GM12878 (cell line): ENCODE measurements at regions of chr3 and their contacts with region 1.

Region 1: DNA sequence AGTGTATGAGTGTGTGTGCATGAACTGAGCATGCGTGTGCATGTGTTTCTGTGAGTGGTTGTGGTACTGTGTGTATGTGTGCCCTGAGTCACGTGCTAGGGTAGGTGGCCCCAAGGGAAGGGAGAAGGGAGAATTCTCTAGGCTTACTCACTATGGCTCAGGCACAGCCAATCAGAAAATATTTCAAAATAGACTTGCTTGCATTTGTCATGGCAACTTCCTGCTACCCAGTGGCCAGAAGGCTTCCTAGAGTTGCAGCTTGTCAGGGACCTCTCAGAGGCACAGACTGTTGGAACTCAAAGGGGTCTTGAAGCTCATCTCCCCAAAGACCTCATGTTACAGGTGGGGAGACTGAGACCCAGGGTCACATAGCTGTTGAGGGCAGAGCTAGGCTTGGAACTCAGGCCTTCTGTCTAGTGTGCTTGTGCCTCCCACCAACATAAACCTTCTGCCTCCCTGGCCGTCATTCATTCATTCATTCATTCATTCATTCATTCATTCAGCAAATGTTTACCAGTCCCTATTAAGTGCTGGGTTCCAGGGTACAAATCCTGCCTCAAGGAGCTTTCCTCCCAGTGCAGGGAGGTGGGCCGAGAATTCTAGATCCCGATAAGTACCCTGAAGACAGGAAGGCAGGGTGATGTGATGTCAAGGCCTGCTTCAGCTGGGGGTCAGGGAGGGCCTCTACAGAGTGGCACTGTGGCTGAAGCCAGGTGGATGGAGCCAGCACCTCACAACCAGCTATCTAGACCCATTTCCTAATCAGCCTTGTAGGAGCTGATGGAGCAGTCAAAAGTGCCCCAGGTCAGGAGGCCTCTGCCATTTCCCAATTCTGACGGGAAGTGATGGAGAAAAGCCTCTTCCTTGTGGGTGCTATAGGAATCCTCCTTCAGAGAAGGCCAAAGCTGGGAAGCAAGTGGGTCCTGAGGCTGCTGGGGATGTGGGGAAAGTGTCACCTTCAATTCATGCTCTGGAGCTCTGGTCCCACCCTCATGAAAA is 10.9 kb upstream of the RFT1 start:
- DNase-seq: no peak
- ATAC-seq: peak; percentile 43
- H3K4me3 ChIP-seq: no peak overlapping the region
- H3K27ac ChIP-seq: no peak overlapping the region
- H3K4me1 ChIP-seq: peaks cover 13% of the 10 kb centered on the region
- H3K27me3 ChIP-seq: no peaks in the 10 kb centered on the region
- CTCF ChIP-seq: no peak
- EP300 ChIP-seq: no peak
- POLR2A ChIP-seq: no peak
- RAD21 ChIP-seq: no peak

Region 2: DNA sequence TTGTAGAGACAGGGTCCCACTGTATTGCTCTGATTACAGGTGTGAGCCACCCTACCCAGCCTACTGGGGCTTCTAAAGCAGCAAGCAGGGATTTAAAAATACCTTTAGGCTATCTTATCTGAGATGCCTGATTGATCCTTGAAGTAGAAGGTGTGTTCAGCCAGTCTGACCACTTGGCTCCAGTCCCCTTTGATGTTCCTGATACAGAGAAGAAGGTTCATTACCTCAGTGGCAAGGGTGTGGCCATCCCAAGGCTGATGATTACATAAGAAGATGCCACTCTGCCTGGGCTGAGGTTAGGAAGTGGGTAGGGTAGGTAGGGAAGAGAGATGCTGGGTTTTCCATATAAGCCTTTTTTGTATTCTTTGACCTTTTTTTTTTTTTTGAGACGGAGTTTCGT is 1630.1 kb before region 1 on chr3:
- CTCF ChIA-PET with region 1: no interaction called
- POLR2A ChIA-PET with region 1: no interaction called
- RAD21 ChIA-PET with region 1: no interaction called
- SMC1A ChIA-PET with region 1: no interaction called
- in situ Hi-C with region 1: no loop called
- intact Hi-C with region 1: no loop called
- DNase-seq: no peak
- ATAC-seq: no peak
- H3K4me3 ChIP-seq: no peak overlapping the region
- H3K27ac ChIP-seq: no peak overlapping the region
- H3K4me1 ChIP-seq: no peaks in the 10 kb centered on the region
- H3K27me3 ChIP-seq: no peaks in the 10 kb centered on the region
- CTCF ChIP-seq: no peak
- EP300 ChIP-seq: no peak
- POLR2A ChIP-seq: no peak
- RAD21 ChIP-seq: no peak

Region 3: DNA sequence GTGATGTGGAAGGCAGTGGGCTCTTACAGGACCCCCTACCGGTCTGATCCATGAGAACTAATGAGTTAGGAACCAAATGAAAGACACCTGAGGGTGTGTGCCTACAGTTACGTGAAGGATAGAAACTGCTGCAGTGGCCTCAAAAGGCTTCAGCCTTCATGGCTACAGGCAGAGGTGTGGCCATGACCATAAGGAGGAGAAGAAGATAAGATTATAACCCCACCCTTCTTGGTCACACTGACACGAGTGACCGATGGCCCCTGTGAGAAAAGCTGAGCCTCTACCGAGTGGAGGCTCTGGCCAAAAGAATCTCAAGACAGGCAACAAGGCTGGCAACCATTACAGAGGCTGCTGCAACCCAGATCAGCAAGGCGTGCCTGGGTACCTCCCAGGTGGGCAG is 17.2 kb before region 1 on chr3:
- CTCF ChIA-PET with region 1: interaction called, 236 read pairs
- POLR2A ChIA-PET with region 1: interaction called, 10 read pairs
- RAD21 ChIA-PET with region 1: no interaction called
- SMC1A ChIA-PET with region 1: interaction called, 3 read pairs
- in situ Hi-C with region 1: no loop called
- intact Hi-C with region 1: no loop called
- DNase-seq: no peak
- ATAC-seq: no peak
- H3K4me3 ChIP-seq: no peak overlapping the region
- H3K27ac ChIP-seq: no peak overlapping the region
- H3K4me1 ChIP-seq: 0 out of 2 replicates have a peak, but pooled peaks cover 2% of the 10 kb centered on the region
- H3K27me3 ChIP-seq: no peaks in the 10 kb centered on the region
- CTCF ChIP-seq: no peak
- EP300 ChIP-seq: no peak
- POLR2A ChIP-seq: no peak
- RAD21 ChIP-seq: no peak